GM10248 (cell line): ENCODE measurements at regions of chr19 and their contacts with region 1.

Region 1: GRCh38 chr19:1113033-1113985 is 9.5 kb downstream of the GPX4 start:
- DNase-seq: peak; percentile 97
- CTCF ChIP-seq: peak; percentile 85

Region 2: DNA sequence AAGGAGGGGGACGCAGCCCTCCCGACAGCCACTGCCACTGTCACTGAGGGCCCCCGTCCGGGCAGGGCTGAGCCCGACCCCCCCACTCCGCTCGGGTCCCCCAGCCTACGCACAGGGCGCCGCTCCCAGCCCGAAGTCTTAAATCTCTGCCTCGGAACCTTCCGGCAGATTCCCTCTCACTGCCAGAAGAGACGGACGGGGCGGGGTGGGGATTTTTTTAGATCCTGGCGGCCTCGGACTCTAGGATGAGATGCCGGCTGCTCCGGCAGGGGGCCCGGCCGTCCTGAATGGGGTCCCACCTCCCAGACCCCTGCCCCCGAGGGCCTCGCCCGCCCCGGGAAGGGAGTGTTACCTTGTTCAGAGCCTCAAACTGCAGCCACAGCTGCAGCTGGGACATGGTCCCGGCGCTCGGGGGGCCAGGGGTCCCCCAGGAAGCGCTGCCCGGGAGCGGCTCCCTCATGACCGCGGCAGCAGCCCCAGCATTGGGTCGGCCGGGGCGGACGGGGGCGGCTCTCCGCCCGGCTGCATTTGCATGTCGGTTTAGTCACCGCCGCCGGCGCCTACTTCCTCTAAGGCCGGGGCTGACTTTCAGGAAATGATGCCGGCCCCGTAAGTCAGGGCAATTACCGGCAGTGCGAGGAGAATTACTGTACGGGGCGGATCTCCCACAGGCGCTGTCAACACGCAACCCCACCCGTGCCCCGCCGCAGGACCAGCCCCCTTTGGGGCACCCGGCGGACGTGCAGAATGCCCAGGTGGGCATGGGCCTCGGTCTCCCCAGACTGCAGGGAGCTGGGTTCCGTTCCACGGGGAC is 18.6 kb after region 1 on chr19:
- CTCF ChIA-PET with region 1: interaction called, 45 read pairs
- POLR2A ChIA-PET with region 1: interaction called, 4 read pairs
- DNase-seq: peak; percentile 89
- CTCF ChIP-seq: no peak

Region 3: GRCh38 chr19:1183534-1184172 is 70.3 kb after region 1 on chr19:
- CTCF ChIA-PET with region 1: interaction called, 11 read pairs
- POLR2A ChIA-PET with region 1: no interaction called
- DNase-seq: peak; percentile 69
- CTCF ChIP-seq: no peak

Region 4: GRCh38 chr19:1189419-1189818 is 76.1 kb after region 1 on chr19:
- CTCF ChIA-PET with region 1: interaction called, 35 read pairs
- POLR2A ChIA-PET with region 1: interaction called, 5 read pairs
- DNase-seq: no peak
- CTCF ChIP-seq: no peak

Region 5: DNA sequence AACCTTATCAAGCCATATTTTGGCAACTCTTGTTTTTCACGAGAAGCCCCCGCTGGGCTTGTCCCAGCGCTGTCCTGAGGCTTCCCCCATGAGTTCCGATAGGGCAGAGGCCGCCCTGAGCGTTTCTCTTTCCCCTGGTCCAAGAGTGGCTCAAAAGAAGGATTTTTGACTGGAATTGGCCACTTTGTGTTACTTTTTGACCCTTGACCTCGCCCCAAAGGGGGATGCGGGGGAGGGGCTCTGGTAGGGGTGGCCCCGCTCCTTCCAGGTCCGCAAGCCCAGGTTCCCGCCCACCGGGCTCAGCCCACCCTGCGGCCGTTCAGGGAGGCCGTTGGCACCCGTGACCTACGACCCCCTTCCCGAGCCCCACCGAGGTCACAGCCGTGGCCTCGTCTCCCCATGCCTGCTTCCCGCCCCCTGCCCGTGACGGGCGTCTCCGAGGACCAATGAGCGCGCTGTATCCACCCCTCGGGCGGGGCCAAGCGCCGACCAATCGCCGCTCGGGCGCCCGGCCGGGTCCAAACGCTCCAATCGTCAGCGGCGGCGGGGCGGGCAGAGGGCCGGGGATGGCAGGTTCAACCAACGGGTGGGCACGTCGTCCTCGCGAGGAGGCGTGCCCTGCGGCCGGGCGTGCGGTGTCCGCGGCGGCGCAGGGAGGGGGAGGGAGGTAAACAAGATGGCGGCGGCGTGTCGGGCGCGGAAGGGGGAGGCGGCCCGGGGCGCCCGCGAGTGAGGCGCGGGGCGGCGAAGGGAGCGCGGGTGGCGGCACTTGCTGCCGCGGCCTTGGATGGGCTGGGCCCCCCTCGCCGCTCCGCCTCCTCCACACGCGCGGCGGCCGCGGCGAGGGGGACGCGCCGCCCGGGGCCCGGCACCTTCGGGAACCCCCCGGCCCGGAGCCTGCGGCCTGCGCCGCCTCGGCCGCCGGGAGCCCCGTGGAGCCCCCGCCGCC is 92.1 kb after region 1 on chr19 and contains the start of gene STK11:
- CTCF ChIA-PET with region 1: interaction called, 29 read pairs
- POLR2A ChIA-PET with region 1: no interaction called
- DNase-seq: peak; percentile 100
- CTCF ChIP-seq: no peak